GM18951 (cell line): ENCODE measurements at regions of chr11 and their contacts with region 1.

Region 1: GRCh38 chr11:22787551-22788162 is 41.9 kb downstream of the SVIP start:
- POLR2A ChIP-seq: no peak

Region 2: DNA sequence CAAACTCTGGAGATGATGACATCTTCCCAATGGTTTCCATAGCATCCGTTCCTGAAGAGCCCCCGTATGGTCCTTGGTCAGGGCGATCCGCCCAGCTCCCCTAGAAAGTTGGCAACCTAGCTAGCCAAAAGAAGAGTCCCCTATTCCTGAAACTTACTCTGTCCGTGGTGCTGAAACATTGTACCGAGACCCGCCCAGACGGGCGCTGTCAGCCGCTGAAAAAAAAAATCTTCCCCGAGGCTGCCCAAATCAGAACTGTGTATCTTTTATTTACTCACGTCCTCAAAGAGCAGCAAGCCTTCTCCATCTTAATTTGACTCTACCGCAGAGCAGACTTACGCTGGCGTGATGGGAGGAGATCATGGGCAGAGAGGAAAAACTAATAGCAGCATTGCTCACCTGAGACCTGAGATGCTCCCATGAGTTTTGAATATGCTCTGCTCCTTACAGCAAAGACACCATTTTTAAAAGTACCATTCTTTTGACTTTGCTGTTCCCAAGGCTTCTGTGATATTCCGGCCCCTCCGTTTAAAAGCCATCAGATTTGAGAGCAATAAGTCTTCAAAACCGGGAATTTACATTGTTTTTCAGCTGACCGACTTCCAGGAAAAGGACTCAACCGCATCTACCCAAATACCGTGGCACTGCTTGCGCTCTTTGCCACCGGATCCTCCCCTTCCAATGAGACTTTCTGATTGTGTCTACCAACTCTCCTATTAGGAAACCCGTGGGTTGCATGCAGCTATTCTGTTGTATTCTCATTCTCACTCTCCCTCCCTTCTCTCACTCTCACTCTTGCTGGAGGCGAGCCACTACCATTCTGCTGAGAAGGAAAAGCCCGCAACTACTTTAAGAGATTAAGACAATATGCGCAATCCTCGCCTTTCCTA is 449.8 kb before region 1 on chr11 and contains the start of gene SLC17A6:
- in situ Hi-C with region 1: loop called (anchors 25 kb)
- POLR2A ChIP-seq: no peak

Region 3: GRCh38 chr11:22730319-22730718 is 57.3 kb before region 1 on chr11:
- in situ Hi-C with region 1: no loop called
- POLR2A ChIP-seq: no peak